Kidney (tissue), 22 donors: ENCODE measurements at regions of chr17 and their contacts with region 1.

Region 1: GRCh38 chr17:48878918-48879898 is 13.4 kb upstream of the ATP5MC1 start:
- DNase-seq: peak in 4 of 5 donors; percentile 61 to 85 (median 74)
- H3K4me3 ChIP-seq: no peak overlapping the region
- H3K27ac ChIP-seq: no peak overlapping the region
- H3K4me1 ChIP-seq: no peaks in the 10 kb centered on the region
- H3K27me3 ChIP-seq: no peaks in the 10 kb centered on the region
- CTCF ChIP-seq: peak; percentile 94

Region 2: GRCh38 chr17:48679385-48680096 is 199.7 kb before region 1 on chr17:
- intact Hi-C with region 1: loop called (anchors 5 kb)
- DNase-seq: no peak
- H3K4me3 ChIP-seq: no peak overlapping the region
- H3K27ac ChIP-seq: no peak overlapping the region
- H3K4me1 ChIP-seq: no peaks in the 10 kb centered on the region
- H3K27me3 ChIP-seq: no peaks in the 10 kb centered on the region
- CTCF ChIP-seq: no peak

Region 3: DNA sequence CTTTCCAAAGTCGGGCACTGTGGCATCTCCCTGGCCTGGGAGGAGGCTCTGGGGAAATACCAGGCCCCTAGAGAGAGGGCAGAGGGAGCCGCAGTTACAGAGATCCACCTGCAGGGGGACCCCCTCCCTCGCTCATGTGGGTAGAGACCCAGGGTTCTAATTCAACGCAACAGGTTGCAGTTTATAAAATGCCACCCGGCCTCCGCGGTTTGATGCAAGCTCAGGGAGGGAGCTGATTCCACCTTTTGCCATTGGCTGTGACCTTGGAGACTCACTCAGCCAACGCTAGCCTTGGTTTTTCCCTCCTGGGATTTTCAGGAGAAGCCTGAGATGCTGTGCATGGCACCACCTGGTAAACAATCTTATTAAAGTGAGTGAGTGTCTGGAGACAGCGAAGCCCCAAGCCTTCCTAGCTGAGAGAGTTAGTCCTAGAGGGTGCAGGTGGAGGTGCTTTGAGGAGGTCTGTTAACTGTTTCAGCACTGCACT is 74.2 kb before region 1 on chr17:
- intact Hi-C with region 1: loop called (anchors 5 kb)
- DNase-seq: peak; percentile 70 to 83 (median 77)
- H3K4me3 ChIP-seq: peak overlapping the region in 1 of 3 donors; percentile 14
- H3K27ac ChIP-seq: peak overlapping the region in 1 of 2 donors; percentile 14
- H3K4me1 ChIP-seq: peaks cover 0 to 37% (median 28%) of the 10 kb centered on the region in 3 donors
- H3K27me3 ChIP-seq: no peaks in the 10 kb centered on the region
- CTCF ChIP-seq: peak; percentile 88

Region 4: GRCh38 chr17:48816774-48817590 is 62.2 kb before region 1 on chr17 and contains the start of gene TTLL6:
- intact Hi-C with region 1: loop called (anchors 5 kb)
- DNase-seq: peak; percentile 94 to 96 (median 95)
- H3K4me3 ChIP-seq: peak within 1 kb of the TSS; percentile 23 to 68 (median 61)
- H3K27ac ChIP-seq: no peak within 1 kb of the TSS
- H3K4me1 ChIP-seq: peaks cover 0 to 9% (median 0%) of the 10 kb centered on the region in 3 donors
- H3K27me3 ChIP-seq: peaks cover 2% of the 10 kb centered on the region
- CTCF ChIP-seq: no peak
- total RNA-seq, gene TTLL6: 2.3 TPM